Endothelial cell of umbilical vein (primary cell): ENCODE measurements at regions of chr17 and their contacts with region 1.

Region 1: GRCh38 chr17:4908301-4908700 is 5.4 kb upstream of the CHRNE start:
- DNase-seq: no peak
- H3K4me3 ChIP-seq: no peak overlapping the region
- H3K27ac ChIP-seq: no peak overlapping the region
- H3K4me1 ChIP-seq: no peaks in the 10 kb centered on the region
- H3K27me3 ChIP-seq: no peaks in the 10 kb centered on the region
- CTCF ChIP-seq: no peak
- POLR2A ChIP-seq: no peak

Region 2: DNA sequence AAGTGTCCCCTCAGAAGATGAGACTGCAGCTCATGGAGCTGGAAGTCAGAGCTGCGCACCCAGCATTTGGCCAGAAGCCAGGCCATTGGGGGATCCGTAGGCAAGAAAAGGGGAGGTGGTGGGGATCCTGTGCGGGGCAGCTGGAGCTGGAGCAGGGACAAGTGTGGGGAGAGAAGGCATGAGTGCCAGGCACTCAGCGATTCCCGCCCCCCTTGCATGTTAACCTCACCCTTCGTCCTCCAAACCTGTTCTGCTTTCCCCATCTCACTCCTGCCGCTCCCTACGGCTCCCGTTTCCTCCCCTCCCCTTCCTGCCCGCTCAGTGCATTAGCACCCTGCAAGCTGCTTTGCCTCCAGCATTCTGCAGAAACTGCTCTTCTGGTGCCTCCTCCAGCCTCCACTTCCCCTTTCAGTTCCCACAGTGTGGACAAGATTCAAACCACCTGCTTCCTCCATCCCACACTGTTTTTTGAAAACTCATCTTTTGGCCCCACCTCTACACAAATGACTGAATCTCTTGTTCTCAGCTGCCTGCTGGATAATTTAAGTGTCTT is 272.4 kb before region 1 on chr17:
- CTCF ChIA-PET with region 1: no interaction called
- POLR2A ChIA-PET with region 1: no interaction called
- dilution Hi-C with region 1: no loop called
- intact Hi-C with region 1: no loop called
- DNase-seq: no peak
- H3K4me3 ChIP-seq: no peak overlapping the region
- H3K27ac ChIP-seq: no peak overlapping the region
- H3K4me1 ChIP-seq: no peaks in the 10 kb centered on the region
- H3K27me3 ChIP-seq: peaks cover 31 to 38% of the 10 kb centered on the region in 2 experiments
- CTCF ChIP-seq: no peak
- POLR2A ChIP-seq: no peak

Region 3: GRCh38 chr17:4823373-4824089 is 84.8 kb before region 1 on chr17:
- CTCF ChIA-PET with region 1: no interaction called
- POLR2A ChIA-PET with region 1: no interaction called
- dilution Hi-C with region 1: no loop called
- intact Hi-C with region 1: no loop called
- DNase-seq: no peak
- H3K4me3 ChIP-seq: no peak overlapping the region
- H3K27ac ChIP-seq: no peak overlapping the region
- H3K4me1 ChIP-seq: no peaks in the 10 kb centered on the region
- H3K27me3 ChIP-seq: no peaks in the 10 kb centered on the region
- CTCF ChIP-seq: no peak
- POLR2A ChIP-seq: no peak

Region 4: GRCh38 chr17:4939796-4940624 is 31.7 kb after region 1 on chr17 and contains the starts of genes RNF167 and SLC25A11:
- CTCF ChIA-PET with region 1: interaction called, 44 read pairs
- POLR2A ChIA-PET with region 1: interaction called, 5 read pairs
- dilution Hi-C with region 1: no loop called
- intact Hi-C with region 1: loop called (anchors 1 kb)
- DNase-seq: peak; percentile 100
- H3K4me3 ChIP-seq: peak within 1 kb of the TSS; percentile 45 to 84 (median 77)
- H3K27ac ChIP-seq: peak within 1 kb of the TSS; percentile 81
- H3K4me1 ChIP-seq: peaks cover 21% of the 10 kb centered on the region
- H3K27me3 ChIP-seq: no peaks in the 10 kb centered on the region
- CTCF ChIP-seq: no peak
- POLR2A ChIP-seq: peak; percentile 85
- total RNA-seq, gene RNF167: 60.2 and 61.0 TPM in 2 replicates
- total RNA-seq, gene SLC25A11: 50.2 and 58.2 TPM in 2 replicates

Region 5: DNA sequence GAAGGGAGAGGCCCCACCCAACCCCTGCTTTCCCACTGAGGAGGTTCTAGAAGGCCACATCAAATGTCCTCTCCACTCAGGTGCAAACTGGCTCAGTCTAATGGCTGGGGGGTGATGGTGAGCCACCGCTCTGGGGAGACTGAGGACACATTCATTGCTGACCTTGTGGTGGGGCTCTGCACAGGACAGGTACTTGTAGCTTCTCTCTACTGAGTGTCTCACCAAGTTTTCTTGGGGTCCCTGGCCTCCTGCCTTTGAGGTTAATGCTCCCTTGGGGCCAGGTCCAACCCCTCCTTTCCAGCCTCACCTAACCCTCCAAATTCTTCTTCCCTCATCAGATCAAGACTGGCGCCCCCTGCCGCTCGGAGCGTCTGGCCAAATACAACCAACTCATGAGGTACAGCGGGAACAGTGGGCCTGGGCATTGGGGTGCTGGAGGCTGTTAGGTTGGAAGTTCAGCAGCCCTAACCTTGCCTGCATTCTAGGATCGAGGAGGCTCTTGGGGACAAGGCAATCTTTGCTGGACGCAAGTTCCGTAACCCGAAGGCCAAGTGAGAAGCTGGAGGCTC is 48.3 kb after region 1 on chr17:
- CTCF ChIA-PET with region 1: interaction called, 22 read pairs
- POLR2A ChIA-PET with region 1: no interaction called
- dilution Hi-C with region 1: no loop called
- intact Hi-C with region 1: no loop called
- DNase-seq: no peak
- H3K4me3 ChIP-seq: no peak overlapping the region
- H3K27ac ChIP-seq: no peak overlapping the region
- H3K4me1 ChIP-seq: peaks cover 15% of the 10 kb centered on the region
- H3K27me3 ChIP-seq: no peaks in the 10 kb centered on the region
- CTCF ChIP-seq: peak; percentile 23 to 24
- POLR2A ChIP-seq: no peak

Region 6: DNA sequence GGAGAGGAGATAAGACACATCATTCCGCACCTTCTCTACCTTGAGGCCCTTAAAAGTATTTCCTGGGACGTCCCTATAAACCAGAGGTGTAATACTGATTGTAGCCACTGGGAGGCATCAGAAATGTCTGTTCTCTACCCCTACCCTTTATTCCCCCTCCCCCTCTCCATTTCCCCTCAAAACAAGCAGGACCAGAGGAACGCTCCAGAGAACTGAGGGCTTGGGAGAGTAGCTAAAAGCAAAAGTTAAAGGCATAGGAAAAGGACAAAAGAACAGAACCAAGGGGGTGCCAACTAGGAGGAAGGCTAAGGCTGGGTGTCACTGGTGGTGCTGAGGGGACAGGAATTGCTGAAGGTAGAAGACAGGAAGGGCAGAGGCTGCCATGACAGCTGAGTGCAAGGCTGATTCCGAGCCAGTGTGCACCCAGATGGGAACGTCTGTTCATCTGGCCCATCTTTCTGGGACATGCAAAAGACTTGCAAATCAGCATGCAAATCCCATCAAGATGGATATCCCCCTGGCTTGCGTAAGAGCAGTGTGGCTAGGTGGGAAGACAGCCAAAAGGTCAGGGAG is 72.4 kb after region 1 on chr17:
- CTCF ChIA-PET with region 1: interaction called, 50 read pairs
- POLR2A ChIA-PET with region 1: no interaction called
- dilution Hi-C with region 1: no loop called
- intact Hi-C with region 1: no loop called
- DNase-seq: peak; percentile 64
- H3K4me3 ChIP-seq: no peak overlapping the region
- H3K27ac ChIP-seq: no peak overlapping the region
- H3K4me1 ChIP-seq: peaks cover 8% of the 10 kb centered on the region
- H3K27me3 ChIP-seq: no peaks in the 10 kb centered on the region
- CTCF ChIP-seq: peak; percentile 47 to 58
- POLR2A ChIP-seq: no peak

Region 7: GRCh38 chr17:4997302-4998026 is 89.2 kb after region 1 on chr17 and contains the starts of genes INCA1 and KIF1C:
- CTCF ChIA-PET with region 1: interaction called, 21 read pairs
- POLR2A ChIA-PET with region 1: no interaction called
- dilution Hi-C with region 1: no loop called
- intact Hi-C with region 1: no loop called
- DNase-seq: peak; percentile 89
- H3K4me3 ChIP-seq: peak within 1 kb of the TSS; percentile 77 to 95 (median 82)
- H3K27ac ChIP-seq: peak within 1 kb of the TSS; percentile 73
- H3K4me1 ChIP-seq: peaks cover 19% of the 10 kb centered on the region
- H3K27me3 ChIP-seq: no peaks in the 10 kb centered on the region
- CTCF ChIP-seq: peak in 1 of 2 donors; percentile 13
- POLR2A ChIP-seq: peak; percentile 73
- total RNA-seq, gene INCA1: 0.71 and 1.0 TPM in 2 replicates
- total RNA-seq, gene KIF1C: 171 and 174 TPM in 2 replicates

Region 8: GRCh38 chr17:5065227-5065744 is 157.0 kb after region 1 on chr17:
- CTCF ChIA-PET with region 1: interaction called, 71 read pairs
- POLR2A ChIA-PET with region 1: no interaction called
- dilution Hi-C with region 1: no loop called
- intact Hi-C with region 1: loop called (anchors 1 kb)
- DNase-seq: no peak
- H3K4me3 ChIP-seq: no peak overlapping the region
- H3K27ac ChIP-seq: no peak overlapping the region
- H3K4me1 ChIP-seq: no peaks in the 10 kb centered on the region
- H3K27me3 ChIP-seq: no peaks in the 10 kb centered on the region
- CTCF ChIP-seq: no peak
- POLR2A ChIP-seq: no peak